ENCODE measurements at regions of chr19 and their contacts with region 1.

Region 1: DNA sequence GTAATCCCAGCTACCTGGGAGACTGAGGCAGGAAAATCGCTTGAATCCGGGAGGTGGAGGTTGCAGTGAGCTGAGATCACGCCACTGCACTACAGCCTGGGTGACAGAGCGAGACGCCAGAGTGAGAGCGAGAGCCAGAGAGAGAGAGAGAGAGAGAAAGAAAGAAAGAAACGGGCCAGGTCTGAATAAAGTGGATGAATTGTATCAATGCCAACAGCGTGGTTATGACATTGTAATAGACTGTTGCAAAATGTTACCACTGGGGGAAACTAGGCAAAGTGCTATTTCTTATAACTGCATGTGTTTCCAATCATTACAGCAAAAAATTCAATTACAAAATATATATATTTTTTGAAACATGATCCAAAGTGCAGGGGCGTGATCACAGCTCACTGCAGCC is 11.8 kb upstream of the BTBD2 start:
- DNase-seq: peak; percentile 69
- ATAC-seq: peak; percentile 37; the same call in 1 of the 2 replicates
- H3K4me3 ChIP-seq: no peak overlapping the region
- H3K27ac ChIP-seq: no peak overlapping the region
- H3K4me1 ChIP-seq: peaks cover 6% of the 10 kb centered on the region
- H3K27me3 ChIP-seq: no peaks in the 10 kb centered on the region
- CTCF ChIP-seq: 0 out of 2 replicates have a peak, but pooled peaks have one; percentile 3
- POLR2A ChIP-seq: no peak
- RAD21 ChIP-seq: no peak

Region 2: DNA sequence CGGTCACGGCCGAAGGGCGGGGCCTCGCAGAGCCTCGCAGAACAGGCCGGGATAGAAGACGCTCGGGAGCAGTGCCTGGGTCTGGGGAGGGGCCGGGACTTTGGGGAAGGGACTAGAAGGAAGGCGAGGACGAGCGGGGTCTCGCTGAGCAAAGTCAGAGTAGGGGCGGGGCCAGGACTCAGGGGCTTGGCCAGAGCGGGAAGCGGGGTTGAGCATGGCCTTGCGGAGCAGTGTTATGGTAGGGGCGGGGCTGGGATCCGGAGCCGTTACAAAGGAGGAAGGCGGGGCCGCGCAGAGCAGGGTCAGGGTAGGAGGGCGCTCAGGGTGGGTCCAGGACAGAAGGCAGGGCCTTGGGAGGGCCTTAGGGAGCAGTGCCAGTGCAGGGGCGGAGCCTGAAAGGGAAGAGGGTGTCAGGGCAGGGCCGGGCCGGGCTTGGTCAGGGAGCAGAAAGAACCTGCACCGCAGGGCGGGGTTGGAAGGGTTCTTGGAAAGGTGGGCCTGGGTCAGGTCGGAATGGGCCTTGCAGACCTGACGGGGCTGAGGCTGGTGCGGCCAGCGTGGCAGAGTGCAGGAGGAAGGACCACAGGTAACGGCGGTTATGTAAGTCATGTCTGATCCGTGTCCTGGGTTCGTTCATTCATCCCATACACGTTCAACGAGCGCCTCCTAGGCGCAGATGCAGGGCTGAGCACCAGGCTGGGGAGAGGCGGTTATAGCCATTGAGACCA is 214.7 kb before region 1 on chr19:
- CTCF ChIA-PET with region 1: no interaction called
- POLR2A ChIA-PET with region 1: interaction called, 10 read pairs
- dilution Hi-C with region 1: no loop called
- in situ Hi-C with region 1: no loop called
- intact Hi-C with region 1: no loop called
- DNase-seq: peak; percentile 90
- ATAC-seq: peak; percentile 91
- H3K4me3 ChIP-seq: peak overlapping the region; percentile 68
- H3K27ac ChIP-seq: peak overlapping the region; percentile 59
- H3K4me1 ChIP-seq: peaks cover 8% of the 10 kb centered on the region
- H3K27me3 ChIP-seq: no peaks in the 10 kb centered on the region
- CTCF ChIP-seq: peak; percentile 60
- POLR2A ChIP-seq: peak; percentile 41; the same call in 1 of the 2 replicates
- RAD21 ChIP-seq: peak; percentile 61

Region 3: GRCh38 chr19:2016041-2016807 is 11.1 kb before region 1 on chr19:
- CTCF ChIA-PET with region 1: no interaction called
- POLR2A ChIA-PET with region 1: no interaction called
- dilution Hi-C with region 1: no loop called
- in situ Hi-C with region 1: no loop called
- intact Hi-C with region 1: no loop called
- DNase-seq: peak; percentile 81
- ATAC-seq: peak; percentile 83
- H3K4me3 ChIP-seq: peak overlapping the region; percentile 30
- H3K27ac ChIP-seq: no peak overlapping the region
- H3K4me1 ChIP-seq: peaks cover 14% of the 10 kb centered on the region
- H3K27me3 ChIP-seq: no peaks in the 10 kb centered on the region
- CTCF ChIP-seq: no peak
- POLR2A ChIP-seq: no peak
- RAD21 ChIP-seq: no peak

Region 4: GRCh38 chr19:2056182-2056836 is 28.9 kb after region 1 on chr19:
- CTCF ChIA-PET with region 1: no interaction called
- POLR2A ChIA-PET with region 1: no interaction called
- dilution Hi-C with region 1: no loop called
- in situ Hi-C with region 1: no loop called
- intact Hi-C with region 1: no loop called
- DNase-seq: peak; percentile 64
- ATAC-seq: peak; percentile 28
- H3K4me3 ChIP-seq: no peak overlapping the region
- H3K27ac ChIP-seq: peak overlapping the region; percentile 82
- H3K4me1 ChIP-seq: peaks cover 31% of the 10 kb centered on the region
- H3K27me3 ChIP-seq: no peaks in the 10 kb centered on the region
- CTCF ChIP-seq: no peak
- POLR2A ChIP-seq: no peak
- RAD21 ChIP-seq: no peak